ENCODE measurements at regions of chr9 and their contacts with region 1.

Region 1: GRCh38 chr9:134067904-134068743 is at the start of gene BRD3:
- DNase-seq: peak; percentile 80
- H3K4me3 ChIP-seq: peak within 1 kb of the TSS; percentile 74 to 92 (median 79)
- H3K27ac ChIP-seq: peak within 1 kb of the TSS; percentile 55
- H3K4me1 ChIP-seq: peaks cover 12% of the 10 kb centered on the region
- H3K27me3 ChIP-seq: peaks cover 14 to 28% of the 10 kb centered on the region in 2 experiments
- CTCF ChIP-seq: no peak
- POLR2A ChIP-seq: peak; percentile 63
- total RNA-seq, gene BRD3: 47.1 and 54.1 TPM in 2 replicates

Region 2: DNA sequence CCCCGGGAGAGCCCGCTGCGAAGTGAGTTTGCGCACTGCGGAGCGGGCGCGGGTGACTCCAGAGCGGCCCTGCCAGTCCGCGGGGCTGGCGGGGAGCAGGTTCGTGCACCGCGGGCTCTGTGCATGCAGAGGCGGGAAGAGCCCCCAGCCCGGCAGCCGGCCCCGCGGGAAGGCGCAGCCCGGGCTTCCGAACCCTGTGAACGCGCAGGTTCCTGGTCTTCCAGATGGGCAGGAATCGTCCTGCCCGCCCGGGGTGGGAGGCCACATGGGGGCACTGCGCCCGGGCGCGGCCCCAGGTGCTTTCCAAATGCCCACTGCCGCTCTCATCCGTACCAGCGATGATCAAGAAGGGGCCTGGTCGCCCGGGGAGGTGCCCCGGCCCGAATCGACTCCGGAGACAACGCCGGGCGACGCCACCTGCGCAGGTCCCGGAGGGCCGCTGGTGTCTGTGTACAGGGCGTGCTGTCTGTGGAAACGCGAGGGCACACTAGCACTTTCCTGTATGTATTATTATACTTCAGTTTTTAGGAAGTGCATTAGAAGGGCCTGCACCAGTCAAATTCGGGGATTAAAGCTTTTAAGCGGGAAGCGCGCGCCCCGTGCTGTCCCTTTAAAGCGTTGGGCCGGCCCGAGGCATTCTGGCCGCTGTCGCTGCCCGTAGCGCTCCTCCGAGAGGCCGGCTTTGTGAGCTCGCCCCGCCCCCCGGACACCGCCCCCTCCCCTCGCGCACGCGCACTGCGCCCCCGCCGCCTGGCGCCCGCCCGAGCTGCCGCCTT is 67.4 kb after region 1 on chr9 and contains the start of gene WDR5:
- CTCF ChIA-PET with region 1: interaction called, 3 read pairs
- POLR2A ChIA-PET with region 1: no interaction called
- dilution Hi-C with region 1: no loop called
- intact Hi-C with region 1: loop called (anchors 1 kb)
- DNase-seq: peak; percentile 81
- H3K4me3 ChIP-seq: peak within 1 kb of the TSS; percentile 84 to 97 (median 93)
- H3K27ac ChIP-seq: peak within 1 kb of the TSS; percentile 48
- H3K4me1 ChIP-seq: peaks cover 10% of the 10 kb centered on the region
- H3K27me3 ChIP-seq: no peaks in the 10 kb centered on the region
- CTCF ChIP-seq: peak in 1 of 2 donors; percentile 12
- POLR2A ChIP-seq: peak; percentile 61
- total RNA-seq, gene WDR5: 42.4 and 42.5 TPM in 2 replicates

Region 3: DNA sequence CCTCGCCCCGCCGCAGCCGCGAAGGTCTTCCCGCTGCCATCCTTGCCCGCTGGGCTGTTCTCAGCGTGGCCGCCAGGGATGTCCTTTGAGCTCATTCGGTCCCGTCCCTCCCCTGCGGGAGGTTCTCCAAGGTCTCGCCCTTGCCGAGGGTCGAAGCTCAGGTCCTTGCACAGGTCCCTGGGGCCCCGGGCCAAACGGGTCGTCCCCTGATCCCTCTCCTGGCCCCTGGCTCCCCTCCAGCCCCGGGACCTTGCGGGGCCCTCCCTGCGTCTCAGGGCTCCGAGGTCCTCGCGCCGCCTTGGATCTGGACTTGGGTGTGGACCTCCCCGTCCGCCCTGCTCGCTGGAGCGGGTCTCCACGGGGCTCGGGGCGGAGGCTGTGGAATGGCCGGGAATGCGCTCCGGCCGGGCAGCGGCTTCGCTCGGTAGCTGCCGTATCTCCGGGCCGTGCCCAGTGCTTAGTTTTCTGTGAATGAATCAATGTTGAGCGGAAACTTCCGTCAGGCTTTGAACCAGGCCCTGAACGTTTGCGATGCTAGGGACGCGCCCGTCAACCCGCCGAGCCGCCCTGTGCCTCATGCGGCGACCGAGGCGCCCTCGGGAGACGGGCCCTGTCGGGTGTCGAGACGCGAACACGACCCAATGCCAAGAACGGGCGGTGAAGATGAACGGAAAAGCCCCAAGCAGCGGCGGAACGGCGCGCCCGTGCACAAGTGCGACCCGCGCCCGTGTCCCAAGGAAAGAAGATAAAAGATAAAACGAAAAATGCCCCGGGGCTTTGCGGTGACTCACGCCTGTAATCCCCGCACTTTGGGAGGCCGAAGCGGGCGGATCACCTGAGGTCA is 95.5 kb after region 1 on chr9:
- CTCF ChIA-PET with region 1: no interaction called
- POLR2A ChIA-PET with region 1: no interaction called
- dilution Hi-C with region 1: no loop called
- intact Hi-C with region 1: loop called (anchors 2 kb)
- DNase-seq: peak; percentile 62
- H3K4me3 ChIP-seq: peak overlapping the region; percentile 6 to 30 (median 25)
- H3K27ac ChIP-seq: peak overlapping the region; percentile 35
- H3K4me1 ChIP-seq: peaks cover 4% of the 10 kb centered on the region
- H3K27me3 ChIP-seq: no peaks in the 10 kb centered on the region
- CTCF ChIP-seq: peak; percentile 34 to 68
- POLR2A ChIP-seq: no peak

Measured in endothelial cell of umbilical vein (primary cell).